ENCODE measurements at regions of chrX and their contacts with region 1.

Region 1: DNA sequence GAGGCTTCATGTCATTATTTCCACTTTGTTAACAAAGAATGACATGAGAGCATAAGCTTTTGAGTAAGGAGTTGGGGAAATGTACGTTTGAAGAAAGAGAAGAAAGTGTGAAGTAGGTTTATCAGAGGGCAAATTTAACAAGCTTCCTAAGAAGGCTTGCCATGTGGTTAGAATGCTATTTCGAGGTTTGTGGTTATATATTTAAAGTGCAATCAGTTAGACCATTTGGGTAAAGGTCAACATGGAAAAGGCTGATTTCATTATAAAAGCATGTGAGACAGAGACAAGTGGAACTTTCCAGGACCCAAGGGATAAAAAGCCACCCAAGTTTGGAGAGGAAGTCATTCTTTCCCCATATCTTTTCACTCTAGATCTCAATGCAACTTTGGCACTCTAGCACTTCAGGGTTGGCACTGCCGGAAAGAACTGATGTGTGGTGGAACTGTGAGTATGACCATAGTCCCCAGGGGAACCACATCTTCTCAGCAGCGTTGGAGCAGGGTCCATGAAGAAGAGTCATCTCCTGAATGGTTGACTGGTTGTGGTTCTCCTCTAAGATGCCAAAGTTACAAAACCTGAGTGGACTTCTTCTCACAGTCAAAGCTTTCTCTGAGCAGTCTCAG is 529.9 kb downstream of the MID1IP1 start:
- DNase-seq: no peak
- H3K4me3 Mint-ChIP-seq: peak overlapping the region; percentile 17
- H3K27ac Mint-ChIP-seq: peak overlapping the region; percentile 97
- H3K4me1 Mint-ChIP-seq: peaks cover 71% of the 10 kb centered on the region
- H3K27me3 Mint-ChIP-seq: no peaks in the 10 kb centered on the region

Region 2: DNA sequence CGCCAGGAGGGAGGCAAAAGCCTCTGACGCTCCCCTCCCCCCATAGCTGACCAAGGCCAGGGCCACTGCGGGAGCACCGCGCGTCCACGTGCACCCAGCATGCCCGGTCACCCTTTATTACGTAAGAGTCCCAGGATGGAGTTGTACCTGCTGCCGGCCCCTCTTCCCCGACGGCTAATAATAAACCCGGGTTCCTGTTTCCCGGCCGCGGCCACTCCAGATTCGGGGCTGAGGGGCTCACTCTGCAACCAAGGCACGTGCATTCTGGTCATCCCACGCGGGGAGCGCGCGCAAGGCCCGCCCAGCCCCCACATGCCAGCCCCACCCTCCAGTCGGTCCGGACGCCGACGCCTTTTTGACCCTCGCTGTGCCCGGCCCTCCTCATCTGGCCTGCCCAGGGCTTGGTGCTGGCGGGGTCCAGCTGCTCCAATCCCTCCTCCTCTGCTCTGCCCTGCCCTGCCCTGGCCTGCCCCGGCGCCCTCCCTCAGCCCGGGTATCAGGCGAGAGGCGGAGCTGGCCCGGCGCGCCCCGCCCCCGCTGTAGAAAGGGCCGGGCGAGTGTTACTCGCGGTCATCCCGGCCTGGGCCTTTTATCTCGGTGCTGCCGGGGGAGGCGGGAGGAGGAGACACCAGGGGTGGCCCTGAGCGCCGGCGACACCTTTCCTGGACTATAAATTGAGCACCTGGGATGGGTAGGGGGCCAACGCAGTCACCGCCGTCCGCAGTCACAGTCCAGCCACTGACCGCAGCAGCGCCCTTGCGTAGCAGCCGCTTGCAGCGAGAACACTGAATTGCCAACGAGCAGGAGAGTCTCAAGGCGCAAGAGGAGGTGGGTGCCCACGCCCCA is 527.4 kb before region 1 on chrX:
- intact Hi-C with region 1: loop called (anchors 5 kb)
- DNase-seq: peak; percentile 74
- H3K4me3 Mint-ChIP-seq: peak overlapping the region; percentile 100
- H3K27ac Mint-ChIP-seq: peak overlapping the region; percentile 98
- H3K4me1 Mint-ChIP-seq: peaks cover 15% of the 10 kb centered on the region
- H3K27me3 Mint-ChIP-seq: no peaks in the 10 kb centered on the region

Region 3: DNA sequence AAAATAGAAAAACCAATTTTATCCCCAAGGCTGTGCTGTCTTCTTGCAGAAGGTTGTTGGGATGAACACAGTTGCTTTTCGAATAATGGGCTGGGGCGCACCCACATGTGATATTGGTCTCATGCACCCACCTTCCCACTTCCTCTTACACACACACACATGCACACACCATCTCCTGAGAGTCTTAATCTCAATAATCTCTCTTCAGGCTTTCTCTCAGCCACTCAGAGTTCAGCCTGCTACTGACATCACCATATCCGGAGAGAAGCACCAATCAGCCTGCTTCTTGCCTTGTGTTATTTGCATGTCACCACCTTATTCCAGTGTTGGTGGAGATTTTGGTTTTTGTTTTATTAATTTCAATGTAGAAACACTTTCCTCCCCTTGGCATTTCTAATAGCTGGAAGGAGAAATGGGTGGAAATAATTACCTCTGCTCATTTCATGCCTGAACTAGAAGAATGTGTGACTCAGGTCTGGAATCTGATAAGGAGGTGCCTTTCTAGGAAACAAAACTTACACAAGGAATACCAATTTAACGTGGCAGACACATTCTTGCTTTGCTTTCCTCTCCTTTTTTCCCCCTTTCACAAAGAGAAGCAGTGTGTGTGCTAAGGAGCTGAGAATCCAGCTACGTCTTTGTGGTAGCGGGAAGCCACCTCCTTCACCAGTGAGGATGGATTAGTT is 129.7 kb before region 1 on chrX:
- intact Hi-C with region 1: loop called (anchors 1 kb)
- DNase-seq: peak; percentile 32
- H3K4me3 Mint-ChIP-seq: peak overlapping the region; percentile 69
- H3K27ac Mint-ChIP-seq: peak overlapping the region; percentile 97
- H3K4me1 Mint-ChIP-seq: peaks cover 89% of the 10 kb centered on the region
- H3K27me3 Mint-ChIP-seq: no peaks in the 10 kb centered on the region

Region 4: DNA sequence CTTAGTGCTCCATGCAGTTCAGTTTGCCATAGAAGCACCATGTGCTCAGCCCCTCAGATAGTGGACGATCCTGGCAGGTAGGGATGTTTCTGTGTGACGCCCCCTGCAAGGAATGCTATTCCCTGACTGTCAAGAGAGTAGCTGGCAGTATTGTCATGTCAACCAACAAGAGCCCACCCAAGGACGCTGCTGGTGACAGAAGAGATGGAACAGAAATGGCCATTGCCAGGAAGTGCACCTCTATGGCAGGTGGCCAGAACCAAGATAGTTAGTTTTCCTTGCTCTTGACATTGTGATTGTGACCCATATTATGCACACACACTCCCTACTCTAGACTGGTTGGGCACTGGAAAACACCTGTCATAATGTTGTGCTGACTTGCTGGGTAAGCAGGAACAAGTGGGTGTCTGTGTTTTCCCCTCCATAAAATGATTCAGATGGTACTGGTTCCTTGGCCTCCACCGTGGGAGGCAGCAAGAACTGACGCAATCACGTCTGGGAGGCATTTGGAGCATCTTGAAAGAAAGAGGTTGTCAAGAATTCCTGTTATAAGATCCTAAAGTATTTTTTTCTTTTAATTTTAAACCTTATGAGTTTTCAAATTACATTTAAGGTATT is 22.1 kb before region 1 on chrX:
- intact Hi-C with region 1: loop called (anchors 1 kb)
- DNase-seq: no peak
- H3K4me3 Mint-ChIP-seq: no peak overlapping the region
- H3K27ac Mint-ChIP-seq: peak overlapping the region; percentile 96
- H3K4me1 Mint-ChIP-seq: peaks cover 65% of the 10 kb centered on the region
- H3K27me3 Mint-ChIP-seq: no peaks in the 10 kb centered on the region

Region 5: GRCh38 chrX:39497702-39498265 is 166.6 kb after region 1 on chrX:
- intact Hi-C with region 1: no loop called
- DNase-seq: no peak
- H3K4me3 Mint-ChIP-seq: no peak overlapping the region
- H3K27ac Mint-ChIP-seq: no peak overlapping the region
- H3K4me1 Mint-ChIP-seq: peaks cover 12% of the 10 kb centered on the region
- H3K27me3 Mint-ChIP-seq: no peaks in the 10 kb centered on the region

Region 6: DNA sequence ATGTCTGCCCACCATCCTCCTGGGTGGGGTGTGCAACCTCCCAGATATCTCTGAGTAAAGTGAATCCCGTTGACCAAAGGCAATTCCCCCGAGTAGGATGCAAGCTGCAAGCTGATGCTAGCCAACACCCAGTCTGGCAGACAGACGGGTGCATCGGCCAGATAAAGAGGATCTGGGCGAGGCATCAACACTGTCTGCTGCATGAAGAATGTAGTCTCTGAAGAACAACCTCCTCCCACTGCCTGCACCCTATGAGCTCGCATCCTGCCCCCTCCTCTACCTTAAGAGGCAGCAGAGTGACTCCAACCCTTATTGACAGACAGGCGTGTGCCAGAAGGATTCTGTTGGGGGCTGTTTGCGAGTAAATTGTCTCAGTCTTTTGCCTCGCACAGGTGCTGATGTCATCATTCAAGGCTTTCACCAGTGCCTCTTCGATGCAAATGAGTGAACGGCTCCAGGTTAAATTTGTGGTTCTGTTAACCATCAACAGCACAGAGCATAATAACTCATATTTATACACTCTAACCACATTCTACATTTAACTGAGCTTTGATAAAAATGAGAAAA is 219.7 kb after region 1 on chrX:
- intact Hi-C with region 1: loop called (anchors 1 kb)
- DNase-seq: no peak
- H3K4me3 Mint-ChIP-seq: no peak overlapping the region
- H3K27ac Mint-ChIP-seq: no peak overlapping the region
- H3K4me1 Mint-ChIP-seq: peaks cover 14% of the 10 kb centered on the region
- H3K27me3 Mint-ChIP-seq: no peaks in the 10 kb centered on the region

Region 7: GRCh38 chrX:39772057-39772832 is 441.1 kb after region 1 on chrX:
- intact Hi-C with region 1: loop called (anchors 5 kb)
- DNase-seq: peak; percentile 37
- H3K4me3 Mint-ChIP-seq: peak overlapping the region; percentile 69
- H3K27ac Mint-ChIP-seq: peak overlapping the region; percentile 99
- H3K4me1 Mint-ChIP-seq: peaks cover 45% of the 10 kb centered on the region
- H3K27me3 Mint-ChIP-seq: no peaks in the 10 kb centered on the region

Measured in activated T-helper 2 cell treated with anti-CD3 and anti-CD28 coated beads, Interferon-gamma antibody, Interleukin-2, Interleukin-4, amounts not matched to agents 10 μg/mL and 5 μg/mL and 100 μg/mL, durations not matched to agents 14 hours and 24 hours and 36 hours (primary cell).